AG04450 (cell line): ENCODE measurements at regions of chr12 and their contacts with region 1.

Region 1: GRCh38 chr12:28237423-28237822 is 47.2 kb downstream of the CCDC91 start:
- DNase-seq: no peak
- H3K4me3 ChIP-seq: no peak overlapping the region
- H3K27ac ChIP-seq: no peak overlapping the region
- H3K27me3 ChIP-seq: no peaks in the 10 kb centered on the region
- CTCF ChIP-seq: peak; percentile 15; the same call in 1 of the 2 replicates

Region 2: DNA sequence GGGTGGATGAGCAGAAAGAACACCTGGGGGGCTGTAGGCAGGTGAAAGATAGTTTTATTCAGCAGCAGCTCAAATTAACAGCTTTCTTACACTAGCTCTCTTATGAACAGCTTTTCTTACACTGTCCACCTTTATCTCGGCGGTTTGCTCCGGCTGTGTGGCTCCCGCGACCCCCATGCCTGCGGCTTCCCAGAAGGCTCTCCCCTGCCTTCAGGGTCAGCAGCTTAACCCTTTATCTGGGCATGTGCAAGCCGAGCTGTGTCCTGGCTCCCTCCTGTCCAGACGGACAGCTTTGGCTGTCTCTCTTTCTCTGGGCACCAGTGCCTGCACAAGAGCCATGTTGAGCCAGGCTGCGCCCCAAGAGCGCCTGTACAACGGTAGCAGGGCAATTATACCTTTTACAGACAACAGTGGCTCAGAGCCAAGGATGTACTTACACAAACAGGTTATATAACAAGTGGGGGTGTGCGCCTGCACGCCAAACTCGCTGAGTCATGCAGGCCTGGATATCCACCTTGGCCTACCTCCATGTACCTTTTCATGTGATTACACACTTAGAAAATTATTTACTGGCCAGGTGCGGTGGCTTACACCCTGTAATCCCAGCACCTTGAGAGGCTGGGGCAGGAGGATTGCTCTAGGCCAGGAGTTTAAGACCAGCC is 485.9 kb before region 1 on chr12:
- CTCF ChIA-PET with region 1: interaction called, 10 read pairs
- POLR2A ChIA-PET with region 1: no interaction called
- DNase-seq: no peak
- H3K4me3 ChIP-seq: no peak overlapping the region
- H3K27ac ChIP-seq: peak overlapping the region; percentile 12
- H3K27me3 ChIP-seq: no peaks in the 10 kb centered on the region
- CTCF ChIP-seq: no peak